Transverse colon (tissue), 4 donors: ENCODE measurements at regions of chr7 and their contacts with region 1.

Region 1: GRCh38 chr7:143321734-143322133 is 5.8 kb downstream of the CLCN1 start:
- DNase-seq: peak; percentile 61
- H3K4me3 ChIP-seq: no peak overlapping the region
- H3K27ac ChIP-seq: no peak overlapping the region
- H3K4me1 ChIP-seq: peaks cover 0 to 9% (median 4%) of the 10 kb centered on the region in 4 donors
- H3K27me3 ChIP-seq: no peaks in the 10 kb centered on the region
- CTCF ChIP-seq: peak in 2 of 5 experiments; percentile 36 to 40
- EP300 ChIP-seq: no peak
- POLR2A ChIP-seq: no peak

Region 2: GRCh38 chr7:143356414-143357050 is 34.8 kb after region 1 on chr7:
- in situ Hi-C with region 1: no loop called
- intact Hi-C with region 1: loop called (anchors 1 kb)
- DNase-seq: no peak
- H3K4me3 ChIP-seq: no peak overlapping the region
- H3K27ac ChIP-seq: no peak overlapping the region
- H3K4me1 ChIP-seq: peaks cover 0 to 5% (median 4%) of the 10 kb centered on the region in 4 donors
- H3K27me3 ChIP-seq: peaks cover 13% of the 10 kb centered on the region
- CTCF ChIP-seq: no peak
- EP300 ChIP-seq: no peak
- POLR2A ChIP-seq: no peak

Region 3: DNA sequence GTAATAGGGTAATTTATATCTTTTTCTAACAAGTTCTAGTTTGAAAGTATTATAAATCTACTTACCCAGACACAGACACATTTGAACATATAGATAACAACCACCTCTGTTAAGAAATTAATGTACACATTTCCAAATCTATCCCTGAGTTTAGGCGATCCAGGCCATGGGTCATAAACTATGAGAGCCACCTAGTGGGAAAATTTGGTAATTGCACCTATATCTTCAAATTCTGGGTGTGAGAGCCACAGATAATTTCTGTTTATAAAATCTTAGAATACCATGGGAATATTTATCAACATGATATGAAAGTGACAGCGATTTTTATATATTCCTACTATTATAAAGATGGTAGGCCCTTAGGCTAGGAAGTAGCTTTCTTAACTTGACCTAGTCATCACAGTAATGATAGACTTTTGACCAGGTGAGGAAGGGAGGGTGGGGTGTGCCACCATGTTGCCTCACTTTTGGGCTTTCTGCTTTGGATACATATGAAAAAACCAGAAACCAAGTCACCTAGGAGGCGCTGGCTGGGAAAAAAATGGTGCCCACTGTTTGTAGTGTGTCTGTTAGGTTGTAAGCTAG is 94.9 kb after region 1 on chr7:
- in situ Hi-C with region 1: loop called in 1 of 4 experiments (anchors 10 kb)
- intact Hi-C with region 1: no loop called
- DNase-seq: no peak
- H3K4me3 ChIP-seq: no peak overlapping the region
- H3K27ac ChIP-seq: no peak overlapping the region
- H3K4me1 ChIP-seq: peaks cover 0 to 7% (median 0%) of the 10 kb centered on the region in 4 donors
- H3K27me3 ChIP-seq: no peaks in the 10 kb centered on the region
- CTCF ChIP-seq: peak; percentile 74 to 79 (median 77)
- EP300 ChIP-seq: no peak
- POLR2A ChIP-seq: no peak

Region 4: DNA sequence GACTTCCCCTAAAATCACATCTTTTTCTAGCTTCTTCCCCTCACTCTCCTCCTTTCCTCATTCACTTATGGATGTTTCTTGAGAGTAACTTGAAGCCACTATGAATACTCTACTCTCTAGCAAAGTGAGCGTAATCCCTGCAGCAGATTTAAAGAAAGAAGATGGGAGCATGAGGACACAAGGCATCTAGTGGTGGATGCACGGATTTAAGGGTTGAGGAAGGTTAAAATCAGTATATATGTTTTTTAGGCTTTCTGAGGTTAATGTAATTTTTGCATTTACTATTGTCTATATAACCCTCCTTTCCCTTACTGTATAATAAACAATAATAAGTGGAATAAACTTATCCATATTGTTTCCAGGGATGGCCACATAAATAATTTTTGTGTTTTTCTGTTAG is 2009.3 kb after region 1 on chr7:
- in situ Hi-C with region 1: no loop called
- intact Hi-C with region 1: no loop called
- DNase-seq: no peak
- H3K4me3 ChIP-seq: no peak overlapping the region
- H3K27ac ChIP-seq: no peak overlapping the region
- H3K4me1 ChIP-seq: no peaks in the 10 kb centered on the region
- H3K27me3 ChIP-seq: no peaks in the 10 kb centered on the region
- CTCF ChIP-seq: no peak
- EP300 ChIP-seq: no peak
- POLR2A ChIP-seq: no peak